Common myeloid progenitor, CD34-positive (primary cell): ENCODE measurements at regions of chr12 and their contacts with region 1.

Region 1: DNA sequence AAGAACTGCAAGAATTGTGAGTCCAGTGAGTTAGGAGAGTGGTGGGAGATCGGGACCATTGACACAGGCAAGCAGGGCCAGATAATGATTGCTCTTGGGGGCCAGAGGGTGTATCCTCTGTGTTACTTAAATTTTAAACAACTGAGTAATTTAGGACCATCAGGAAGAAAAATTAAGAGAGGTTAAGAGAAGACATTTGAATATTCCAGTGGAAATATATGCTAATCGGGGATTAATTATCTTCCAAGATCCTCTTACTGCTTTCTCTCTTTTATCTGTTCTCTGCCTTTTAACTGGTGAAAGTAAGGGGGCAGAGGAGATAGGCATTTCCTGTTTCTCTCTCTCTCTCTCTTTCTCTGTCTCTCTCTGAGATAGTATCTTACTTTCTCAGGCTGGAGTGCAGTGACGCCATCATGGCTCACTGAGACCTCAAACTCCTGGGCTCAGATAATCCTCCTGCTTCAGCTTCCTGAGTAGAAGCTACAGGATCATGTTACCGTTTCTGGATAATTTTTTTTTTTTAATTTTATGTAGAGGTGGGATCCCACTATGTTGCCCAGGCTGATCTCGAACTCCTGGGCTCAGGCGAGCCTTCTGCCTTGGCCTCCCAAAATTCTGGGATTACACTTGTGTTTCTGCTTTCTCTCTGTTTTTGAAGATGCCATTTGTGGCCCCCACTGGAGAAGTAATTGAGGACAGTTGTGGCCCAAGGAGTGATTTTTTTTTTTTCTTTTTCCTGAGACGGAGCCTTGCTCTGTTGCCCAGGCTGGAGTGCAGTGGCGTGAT is 85.1 kb downstream of the DIP2B start:
- DNase-seq: peak; percentile 40 to 60 (median 47)
- H3K4me3 ChIP-seq: no peak overlapping the region
- H3K27ac ChIP-seq: peak overlapping the region in 1 of 2 experiments; percentile 58
- H3K4me1 ChIP-seq: peaks cover 0 to 10% (median 3%) of the 10 kb centered on the region in 4 experiments
- H3K27me3 ChIP-seq: no peaks in the 10 kb centered on the region

Region 2: DNA sequence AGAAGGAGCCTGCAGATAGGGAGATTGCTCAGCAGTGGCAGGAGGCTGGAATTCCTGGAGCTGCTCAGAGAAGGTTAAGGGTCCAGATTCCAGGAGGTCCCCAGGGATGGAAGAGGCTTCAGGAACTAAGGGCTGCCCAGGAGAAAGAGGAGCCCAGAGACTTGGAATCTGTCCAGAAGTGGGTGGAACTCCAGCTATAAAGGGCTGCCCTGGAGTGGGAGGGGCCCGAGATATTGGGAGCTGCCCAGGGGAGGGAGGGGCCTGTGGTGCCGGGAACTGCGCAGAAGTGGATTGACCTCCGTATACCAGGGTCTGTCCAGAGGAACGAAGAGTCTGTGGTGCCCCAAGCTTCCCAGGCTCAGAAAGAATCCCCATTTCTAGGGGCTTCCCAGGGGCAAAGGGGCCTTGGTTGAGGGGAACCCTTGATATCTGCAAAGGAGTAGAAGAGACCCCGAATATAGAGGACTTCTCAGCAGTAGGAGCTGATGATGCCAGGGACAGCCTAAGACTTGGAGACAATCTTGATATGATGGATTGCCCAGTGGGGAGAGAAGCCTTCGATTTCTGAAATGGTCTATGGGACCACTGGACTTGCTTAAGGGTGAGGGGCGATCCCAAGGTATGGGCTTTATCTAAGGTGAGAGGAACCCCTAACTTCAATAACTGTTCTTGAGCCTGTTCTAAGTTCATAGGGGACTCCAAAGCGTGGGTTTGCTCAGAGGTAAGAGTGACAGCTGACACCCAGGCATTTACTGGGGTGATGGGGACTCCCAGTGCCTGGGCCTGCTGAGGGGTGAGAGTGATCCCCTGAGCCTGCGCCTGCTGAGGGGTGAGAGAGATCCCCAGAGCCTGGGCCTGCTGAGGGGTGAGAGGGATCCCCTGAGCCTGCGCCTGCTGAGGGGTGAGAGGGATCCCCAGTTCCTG is 238.5 kb before region 1 on chr12:
- CTCF ChIA-PET with region 1: no interaction called
- POLR2A ChIA-PET with region 1: no interaction called
- DNase-seq: no peak
- H3K4me3 ChIP-seq: no peak overlapping the region
- H3K27ac ChIP-seq: no peak overlapping the region
- H3K4me1 ChIP-seq: peaks cover 2 to 16% (median 7%) of the 10 kb centered on the region in 4 experiments
- H3K27me3 ChIP-seq: no peaks in the 10 kb centered on the region

Region 3: DNA sequence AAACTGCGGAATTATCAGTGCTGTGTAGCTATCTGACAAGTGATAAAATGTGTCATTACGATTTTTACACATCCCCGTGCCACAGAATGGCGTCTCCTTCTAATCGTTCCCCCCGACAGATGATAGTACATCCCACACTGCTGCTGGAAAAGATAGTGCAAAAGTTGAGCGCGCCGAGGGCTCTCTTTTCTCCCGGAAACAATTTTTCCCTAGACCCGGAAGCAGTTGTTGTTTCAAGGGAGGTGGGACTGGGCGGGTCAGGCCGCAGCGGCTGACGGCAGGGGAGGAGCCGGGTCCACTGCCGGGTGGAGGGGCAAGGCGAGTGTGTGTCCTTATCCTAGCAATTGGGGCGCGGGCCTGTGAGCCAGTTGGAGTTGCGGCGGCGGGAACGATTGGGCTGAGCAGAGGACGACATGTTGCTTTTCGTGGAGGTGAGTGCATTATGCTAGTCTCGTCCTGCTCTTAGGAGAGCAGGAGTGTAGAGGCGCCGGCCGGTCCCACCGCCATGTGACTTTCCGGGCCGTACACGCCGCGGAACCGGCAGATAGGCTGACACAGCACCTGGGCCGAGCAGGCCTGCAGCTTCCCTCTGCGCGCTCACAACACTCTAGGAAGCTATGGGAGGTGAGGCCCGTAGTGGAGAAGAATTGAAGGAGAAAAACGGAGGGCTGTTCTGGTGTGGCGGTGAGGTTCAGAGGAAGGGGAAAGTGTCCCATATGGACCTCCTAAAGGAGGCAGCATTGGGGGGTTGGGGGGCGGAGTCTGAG is 189.1 kb before region 1 on chr12 and contains the start of gene LARP4:
- CTCF ChIA-PET with region 1: no interaction called
- POLR2A ChIA-PET with region 1: no interaction called
- DNase-seq: peak; percentile 96 to 98 (median 97)
- H3K4me3 ChIP-seq: peak within 1 kb of the TSS; percentile 67 to 98 (median 97)
- H3K27ac ChIP-seq: peak within 1 kb of the TSS; percentile 76 to 95
- H3K4me1 ChIP-seq: peaks cover 13 to 25% (median 16%) of the 10 kb centered on the region in 4 experiments
- H3K27me3 ChIP-seq: peaks cover 0 to 4% (median 0%) of the 10 kb centered on the region in 5 experiments

Region 4: GRCh38 chr12:50572271-50572670 is 17.6 kb before region 1 on chr12:
- CTCF ChIA-PET with region 1: interaction called, 10 read pairs
- POLR2A ChIA-PET with region 1: no interaction called
- DNase-seq: peak; percentile 15 to 54 (median 52)
- H3K4me3 ChIP-seq: no peak overlapping the region
- H3K27ac ChIP-seq: peak overlapping the region in 1 of 2 experiments; percentile 4
- H3K4me1 ChIP-seq: peaks cover 4 to 42% (median 18%) of the 10 kb centered on the region in 4 experiments
- H3K27me3 ChIP-seq: no peaks in the 10 kb centered on the region